A549 (cell line): ENCODE measurements at regions of chr14 and their contacts with region 1.

Region 1: DNA sequence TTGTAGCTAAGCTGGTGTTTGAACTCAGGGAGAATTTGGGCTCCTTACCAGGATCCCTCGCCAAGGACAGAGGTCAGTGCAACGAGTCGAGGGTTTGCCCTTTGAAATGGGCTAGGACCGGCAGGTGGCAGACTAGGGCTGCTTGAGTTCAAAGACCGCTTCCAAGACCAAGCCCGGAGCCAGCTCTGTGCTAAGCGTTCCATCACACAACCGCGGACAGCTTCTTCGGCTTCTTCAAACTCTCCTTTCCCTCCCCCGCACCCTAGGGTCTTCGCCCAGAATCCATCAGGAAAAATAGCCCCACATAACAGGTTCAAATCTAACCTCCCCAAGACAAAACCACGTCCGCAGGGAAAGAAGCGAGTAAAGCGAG is 705 bp upstream of the FLVCR2 start:
- DNase-seq: peak; percentile 86 to 90
- ATAC-seq: peak; percentile 90 to 96
- H3K4me3 ChIP-seq: peak overlapping the region; percentile 53
- H3K27ac ChIP-seq: peak overlapping the region; percentile 75 to 79
- H3K4me1 ChIP-seq: peaks cover 8% of the 10 kb centered on the region
- CTCF ChIP-seq: peak; percentile 86
- EP300 ChIP-seq: no peak
- POLR2A ChIP-seq: no peak
- RAD21 ChIP-seq: peak; percentile 92 to 93

Region 2: DNA sequence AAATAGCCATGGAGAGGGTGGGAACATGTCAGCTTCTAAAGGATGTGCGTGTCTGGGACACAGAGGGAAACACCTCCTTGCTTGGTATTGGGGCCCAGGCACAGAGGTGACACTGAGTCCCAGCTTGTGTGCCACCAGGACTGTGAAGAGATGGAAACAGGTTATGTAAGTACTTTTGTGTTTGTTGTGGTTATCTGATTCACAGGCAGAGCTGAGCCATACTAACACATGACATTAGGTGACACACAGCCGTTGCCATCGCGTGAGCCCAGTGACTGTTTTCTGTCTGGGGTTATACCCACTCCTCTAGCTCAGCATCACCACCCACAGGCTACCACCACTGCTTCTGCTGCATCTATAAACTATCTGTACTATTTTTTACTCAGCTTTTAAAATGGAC is 11.4 kb before region 1 on chr14:
- CTCF ChIA-PET with region 1: interaction called, 143 read pairs
- POLR2A ChIA-PET with region 1: no interaction called
- DNase-seq: no peak
- ATAC-seq: 0 out of 6 replicates have a peak, but pooled peaks of 1 of the 2 experiments have one; percentile 21
- H3K4me3 ChIP-seq: no peak overlapping the region
- H3K27ac ChIP-seq: no peak overlapping the region
- H3K4me1 ChIP-seq: no peaks in the 10 kb centered on the region; the same call in 2 of the 3 replicates
- CTCF ChIP-seq: no peak
- EP300 ChIP-seq: no peak
- POLR2A ChIP-seq: no peak
- RAD21 ChIP-seq: no peak

Region 3: GRCh38 chr14:75615200-75615599 is 37.5 kb after region 1 on chr14:
- CTCF ChIA-PET with region 1: interaction called, 16 read pairs
- POLR2A ChIA-PET with region 1: no interaction called
- DNase-seq: no peak
- ATAC-seq: no peak
- H3K4me3 ChIP-seq: no peak overlapping the region
- H3K27ac ChIP-seq: no peak overlapping the region
- H3K4me1 ChIP-seq: no peaks in the 10 kb centered on the region
- CTCF ChIP-seq: no peak
- EP300 ChIP-seq: no peak
- POLR2A ChIP-seq: no peak
- RAD21 ChIP-seq: no peak

Region 4: DNA sequence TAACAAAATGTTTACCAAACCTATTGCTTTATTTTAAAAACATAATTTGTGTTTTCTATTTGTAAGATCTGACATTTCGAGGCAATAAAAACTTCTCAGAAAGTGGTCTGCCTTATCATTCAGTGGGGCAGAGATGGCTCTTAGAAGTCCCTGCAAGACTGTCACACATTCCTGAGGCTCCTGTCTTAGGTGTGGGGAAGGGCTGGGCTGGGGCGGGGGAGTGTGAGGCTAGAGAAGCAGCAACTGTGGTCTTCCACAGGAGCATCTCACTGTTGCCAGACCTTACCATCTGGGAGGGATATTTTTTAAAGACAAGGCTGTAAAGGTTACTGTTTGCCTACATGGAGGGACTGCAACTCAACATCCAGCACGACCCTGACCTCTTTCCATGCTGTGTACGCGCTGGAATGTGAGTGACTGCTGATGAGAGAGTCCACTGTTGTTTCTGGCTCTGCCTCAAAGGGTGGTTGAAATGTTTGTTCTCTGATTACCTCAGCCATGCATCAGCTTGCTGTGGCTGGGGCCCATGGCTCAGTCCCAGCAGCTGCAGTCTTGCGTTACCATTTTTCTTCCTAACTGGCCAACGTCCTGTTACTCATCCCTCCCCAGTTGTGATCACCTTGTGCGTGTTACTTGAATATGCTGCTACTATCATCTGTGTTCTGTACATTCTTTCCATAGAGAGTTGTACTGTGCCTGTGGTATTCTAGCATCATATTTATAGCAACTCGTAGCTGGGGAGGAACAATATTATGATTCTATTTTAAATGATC is 70.5 kb after region 1 on chr14:
- CTCF ChIA-PET with region 1: interaction called, 546 read pairs
- POLR2A ChIA-PET with region 1: interaction called, 7 read pairs
- DNase-seq: peak; percentile 64 to 82
- ATAC-seq: peak; percentile 92 to 93
- H3K4me3 ChIP-seq: no peak overlapping the region
- H3K27ac ChIP-seq: peak overlapping the region; percentile 73 to 84
- H3K4me1 ChIP-seq: peaks cover 60% of the 10 kb centered on the region
- CTCF ChIP-seq: no peak
- EP300 ChIP-seq: peak; percentile 57 to 86; a peak in 3 of 5 replicates
- POLR2A ChIP-seq: no peak
- RAD21 ChIP-seq: no peak; a peak in 2 of 5 replicates

Region 5: DNA sequence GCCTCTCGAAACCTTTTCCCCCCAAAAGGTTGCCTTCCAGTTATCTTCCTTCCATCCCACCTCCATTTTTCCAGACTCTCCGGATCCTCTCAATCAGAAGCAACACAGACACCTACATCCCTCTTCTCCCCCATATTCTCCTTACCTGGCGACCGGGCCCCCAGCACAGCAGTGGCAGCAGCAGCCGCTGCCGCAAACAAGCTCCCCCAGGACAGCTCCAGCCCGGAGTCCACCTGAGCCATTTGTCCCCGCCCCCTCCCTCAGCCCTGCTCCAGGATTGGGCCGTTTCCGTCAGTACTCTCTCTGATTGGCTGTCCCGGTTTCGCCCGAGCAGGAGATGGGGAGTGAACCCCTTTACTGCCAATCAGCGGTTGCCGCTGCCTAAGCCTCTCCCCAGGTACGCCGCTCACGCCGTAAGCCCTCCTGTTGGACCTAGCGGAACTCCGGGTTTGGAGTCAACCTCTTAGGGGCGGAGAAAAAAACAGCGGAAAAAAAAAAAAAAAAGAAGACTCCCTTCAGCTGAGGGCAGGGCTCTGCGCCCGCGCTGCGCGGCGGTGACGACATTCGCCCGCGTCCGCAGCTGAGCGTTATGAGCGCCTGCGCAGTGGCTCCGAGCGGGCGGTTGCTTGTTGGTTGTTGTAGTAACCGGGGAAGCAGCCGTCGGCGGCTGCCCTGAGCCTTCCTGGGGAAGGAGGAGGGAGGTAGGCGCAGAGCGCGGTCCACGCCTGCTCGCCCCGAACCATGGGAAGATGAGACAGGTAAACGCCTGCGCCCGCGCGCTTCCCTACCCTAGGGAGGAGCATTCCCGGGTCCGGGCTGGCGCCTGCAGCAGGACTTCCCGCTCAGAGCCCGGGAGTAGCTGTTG is 83.1 kb after region 1 on chr14 and contains the starts of genes ERG28 and TTLL5:
- CTCF ChIA-PET with region 1: interaction called, 546 read pairs
- POLR2A ChIA-PET with region 1: interaction called, 12 read pairs
- DNase-seq: peak; percentile 99
- ATAC-seq: peak; percentile 98 to 99
- H3K4me3 ChIP-seq: peak within 1 kb of the TSS; percentile 88
- H3K27ac ChIP-seq: peak within 1 kb of the TSS; percentile 80 to 87
- H3K4me1 ChIP-seq: peaks cover 14% of the 10 kb centered on the region; the same call in 2 of the 3 replicates
- CTCF ChIP-seq: no peak
- EP300 ChIP-seq: no peak
- POLR2A ChIP-seq: peak; percentile 73
- RAD21 ChIP-seq: no peak
- polyA plus RNA-seq, gene ERG28: 22.3 and 23.4 TPM in 2 replicates
- polyA plus RNA-seq, gene TTLL5: 23.7 and 36.7 TPM in 2 replicates

Region 6: DNA sequence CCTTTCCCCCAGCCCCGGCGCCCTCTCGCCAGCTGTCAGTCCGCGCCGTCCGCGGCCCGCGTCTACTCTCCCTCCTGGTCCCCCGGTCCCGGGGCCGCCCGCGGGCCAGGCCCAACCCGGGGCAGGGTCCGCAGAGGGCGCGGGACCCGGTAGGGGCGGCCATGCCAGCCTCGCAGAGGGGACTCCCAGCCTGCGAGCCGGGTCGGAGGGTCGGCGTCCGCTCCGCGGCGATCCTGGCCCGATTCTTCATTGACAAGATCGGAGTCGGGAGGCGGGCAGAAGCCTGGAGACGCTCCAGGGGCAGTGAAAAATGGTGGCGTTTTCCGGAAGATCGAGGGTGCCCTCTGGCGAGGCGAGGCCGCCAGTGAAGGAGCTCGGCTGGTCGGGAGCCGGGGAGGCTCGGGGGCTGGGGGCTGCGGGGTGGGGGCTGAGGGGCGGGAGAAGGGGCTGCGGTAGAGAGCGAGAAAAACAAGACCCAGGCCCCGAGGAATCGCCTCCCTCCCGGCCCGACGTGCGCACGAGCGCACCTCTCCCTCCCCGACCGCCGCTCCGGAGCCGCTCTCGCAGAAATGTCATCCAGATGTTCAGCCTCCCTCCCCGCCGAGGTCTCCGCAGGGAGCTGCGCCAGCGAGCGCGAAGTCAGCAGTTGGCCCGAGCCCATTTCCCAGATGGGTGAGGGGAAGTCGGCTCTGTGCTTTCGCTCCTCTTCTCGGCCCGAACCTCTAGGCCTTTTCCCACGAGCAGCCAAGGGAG is 404.7 kb after region 1 on chr14:
- CTCF ChIA-PET with region 1: interaction called, 28 read pairs
- POLR2A ChIA-PET with region 1: no interaction called
- DNase-seq: peak; percentile 73 to 74
- ATAC-seq: peak; percentile 75 to 88
- H3K4me3 ChIP-seq: peak overlapping the region; percentile 74
- H3K27ac ChIP-seq: peak overlapping the region; percentile 66 to 83
- H3K4me1 ChIP-seq: peaks cover 22% of the 10 kb centered on the region; the same call in 2 of the 3 replicates
- CTCF ChIP-seq: peak; percentile 68
- EP300 ChIP-seq: no peak
- POLR2A ChIP-seq: no peak
- RAD21 ChIP-seq: peak; percentile 79 to 93